BJ (cell line): ENCODE measurements at regions of chr10 and their contacts with region 1.

Region 1: GRCh38 chr10:102009801-102010425 is 46.1 kb downstream of the ARMH3 start:
- DNase-seq: peak; percentile 56
- H3K4me3 ChIP-seq: no peak overlapping the region
- H3K27me3 ChIP-seq: no peaks in the 10 kb centered on the region
- CTCF ChIP-seq: peak; percentile 97

Region 2: DNA sequence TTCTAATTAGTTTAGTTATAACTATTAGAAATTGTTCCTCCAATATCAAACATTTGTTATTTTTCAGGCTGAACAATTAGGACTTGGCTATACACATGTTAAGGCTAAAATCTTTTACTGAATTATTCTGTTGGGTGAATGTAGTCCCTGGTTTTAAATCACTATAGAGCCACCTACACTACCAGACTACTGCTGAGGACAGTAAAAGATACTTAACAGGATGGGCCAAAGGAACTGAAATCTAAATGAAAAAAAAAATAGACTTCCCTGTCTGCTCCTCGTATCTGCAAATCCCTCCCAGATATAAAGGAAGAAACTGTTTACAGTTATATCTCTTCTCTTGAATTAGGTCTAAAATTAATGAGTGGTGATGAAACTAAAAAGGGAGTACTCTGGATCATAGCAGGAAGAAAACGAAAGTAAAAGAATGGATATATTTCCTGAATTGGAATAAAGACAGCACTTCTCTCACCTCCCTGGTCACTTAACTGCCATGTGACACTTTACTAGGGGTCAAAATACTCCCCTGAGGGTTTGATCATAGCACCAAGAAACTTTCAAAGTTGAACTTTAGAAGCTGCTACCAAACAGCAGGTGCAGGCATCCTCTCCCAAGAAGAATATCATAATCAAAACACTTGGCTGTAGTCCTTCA is 327.6 kb before region 1 on chr10:
- CTCF ChIA-PET with region 1: no interaction called
- POLR2A ChIA-PET with region 1: no interaction called
- DNase-seq: no peak
- H3K4me3 ChIP-seq: no peak overlapping the region
- H3K27me3 ChIP-seq: no peaks in the 10 kb centered on the region
- CTCF ChIP-seq: no peak

Region 3: DNA sequence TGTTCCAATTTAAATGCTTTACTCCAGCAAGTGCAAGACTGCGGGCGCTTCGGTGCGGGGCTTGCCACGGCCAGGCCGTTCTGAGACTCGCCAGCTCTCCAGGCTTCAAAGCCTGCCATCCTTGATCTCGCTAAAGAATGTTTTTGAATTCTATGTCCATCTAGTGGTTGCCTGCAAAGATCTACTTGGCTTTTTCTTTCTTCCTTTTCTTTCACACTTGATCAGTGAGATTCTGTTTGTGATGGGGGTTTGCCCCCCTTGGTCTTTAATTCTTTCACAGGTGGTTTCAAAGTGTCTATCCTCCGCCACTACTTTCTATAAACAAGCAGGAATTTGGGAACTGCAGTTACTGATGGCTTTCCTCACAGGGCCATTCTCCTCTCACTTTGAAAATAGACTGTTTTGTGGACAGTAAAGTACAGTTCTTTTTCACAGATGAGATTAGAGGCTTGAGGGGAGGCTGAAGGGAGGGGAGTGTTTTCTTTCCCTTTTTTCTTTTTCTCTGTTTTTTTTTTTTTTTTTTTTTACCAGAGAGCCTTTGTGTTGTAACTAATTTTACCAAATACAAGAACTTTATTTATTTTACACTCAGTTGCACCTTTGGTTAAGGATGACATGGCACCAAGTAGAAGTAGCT is 299.7 kb before region 1 on chr10:
- CTCF ChIA-PET with region 1: no interaction called
- POLR2A ChIA-PET with region 1: no interaction called
- DNase-seq: no peak
- H3K4me3 ChIP-seq: no peak overlapping the region
- H3K27me3 ChIP-seq: no peaks in the 10 kb centered on the region
- CTCF ChIP-seq: peak; percentile 12; the same call in 1 of the 2 replicates

Region 4: GRCh38 chr10:101782811-101783735 is 226.8 kb before region 1 on chr10 and contains the start of gene NPM3:
- CTCF ChIA-PET with region 1: interaction called, 11 read pairs
- POLR2A ChIA-PET with region 1: no interaction called
- DNase-seq: peak; percentile 17
- H3K4me3 ChIP-seq: peak within 1 kb of the TSS; percentile 77
- H3K27me3 ChIP-seq: no peaks in the 10 kb centered on the region
- CTCF ChIP-seq: no peak
- polyA plus RNA-seq, gene NPM3: 31.8 and 35.6 TPM in 2 replicates

Region 5: DNA sequence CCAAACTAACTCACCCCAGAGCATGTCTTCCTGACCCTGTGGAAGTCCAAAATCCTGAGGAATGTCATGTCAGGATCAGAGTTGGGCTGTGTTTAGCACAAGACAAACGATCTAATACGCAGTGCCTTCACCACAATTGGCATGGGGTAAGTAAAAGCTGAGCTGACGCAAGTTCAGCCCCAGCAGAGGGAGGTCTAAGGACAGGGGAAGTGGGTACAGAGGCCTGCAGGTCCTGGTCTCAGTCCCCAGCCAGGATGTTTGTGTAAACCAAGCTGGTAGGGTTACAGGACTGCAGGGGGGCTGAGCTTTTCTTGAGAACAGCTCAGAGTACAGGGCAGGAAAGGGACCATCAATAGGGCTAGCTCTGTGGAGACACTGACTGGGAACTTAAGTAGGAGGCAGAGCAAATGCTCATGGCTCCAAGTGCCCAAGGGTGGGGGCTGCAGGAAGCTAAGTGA is 161.0 kb before region 1 on chr10:
- CTCF ChIA-PET with region 1: interaction called, 15 read pairs
- POLR2A ChIA-PET with region 1: no interaction called
- DNase-seq: no peak
- H3K4me3 ChIP-seq: no peak overlapping the region
- H3K27me3 ChIP-seq: no peaks in the 10 kb centered on the region
- CTCF ChIP-seq: no peak

Region 6: DNA sequence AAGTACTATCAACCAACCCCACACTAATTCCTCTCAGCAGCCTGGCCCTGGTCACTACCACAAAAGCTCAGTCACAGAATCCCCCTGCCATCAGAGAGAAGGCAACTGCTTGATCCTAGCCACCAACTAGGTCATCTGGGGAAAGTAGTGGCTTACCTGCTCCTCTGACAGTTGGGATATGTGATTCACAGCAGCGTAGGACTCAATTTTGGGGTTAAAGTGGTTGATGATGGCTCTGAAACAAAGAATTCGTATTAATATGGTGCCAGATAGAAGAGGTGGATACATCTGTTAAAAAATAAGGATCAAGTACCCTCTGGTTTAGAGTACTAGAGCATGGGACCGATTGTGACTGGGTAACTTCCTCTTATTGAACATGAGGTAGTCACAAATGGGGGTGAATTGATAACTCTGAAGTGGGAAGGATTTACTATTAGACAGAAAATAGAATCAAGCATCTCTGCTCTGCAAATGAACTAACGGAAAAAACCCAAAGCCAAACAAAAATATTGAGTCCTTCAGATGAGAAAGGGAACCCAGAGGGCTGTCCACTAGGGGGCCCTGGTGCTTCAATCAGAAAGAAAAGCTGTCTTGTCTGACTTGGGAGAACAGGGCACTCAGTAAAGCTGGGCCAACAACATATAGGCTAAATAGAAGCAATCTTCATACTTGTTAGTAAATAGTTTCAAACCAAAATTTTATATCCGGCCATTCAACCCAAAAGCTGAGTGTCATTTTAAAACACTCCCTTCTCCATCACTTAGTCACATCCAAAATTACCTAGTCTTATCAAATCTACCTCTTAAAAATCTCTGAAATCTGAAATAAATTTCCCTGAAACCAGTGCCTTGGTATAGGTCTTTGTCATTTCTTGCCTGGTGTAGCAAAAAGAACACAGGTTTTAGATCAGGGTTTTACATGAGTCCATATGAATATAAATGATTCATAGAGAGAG is 120.4 kb before region 1 on chr10:
- CTCF ChIA-PET with region 1: interaction called, 152 read pairs
- POLR2A ChIA-PET with region 1: interaction called, 10 read pairs
- DNase-seq: no peak
- H3K4me3 ChIP-seq: no peak overlapping the region
- H3K27me3 ChIP-seq: no peaks in the 10 kb centered on the region
- CTCF ChIP-seq: peak; percentile 90

Region 7: DNA sequence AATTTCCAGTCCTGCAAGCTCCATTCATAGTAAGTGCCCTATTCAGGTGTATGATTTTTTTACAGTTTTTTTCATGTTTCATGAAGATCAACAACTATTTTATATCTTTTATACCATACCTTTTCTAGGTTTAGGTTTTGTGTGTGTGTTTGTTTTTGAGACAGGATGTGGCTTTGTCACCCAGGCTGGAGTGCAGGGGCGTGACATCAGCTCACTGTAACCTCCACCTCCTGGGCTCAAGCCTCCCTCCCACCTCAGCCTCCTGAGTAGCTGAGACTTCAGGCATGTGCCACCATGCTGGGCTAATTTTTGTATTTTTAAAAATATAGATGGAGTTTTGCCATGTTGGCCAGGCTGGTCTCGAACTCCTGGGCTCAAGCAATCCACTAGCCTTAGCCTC is 11.0 kb after region 1 on chr10:
- CTCF ChIA-PET with region 1: interaction called, 28 read pairs
- POLR2A ChIA-PET with region 1: interaction called, 22 read pairs
- DNase-seq: no peak
- H3K4me3 ChIP-seq: no peak overlapping the region
- H3K27me3 ChIP-seq: no peaks in the 10 kb centered on the region
- CTCF ChIP-seq: no peak